Activated CD4-positive, alpha-beta T cell treated with anti-CD3 and anti-CD28 coated beads for 36 hours (primary cell): ENCODE measurements at regions of chr7 and their contacts with region 1.

Region 1: DNA sequence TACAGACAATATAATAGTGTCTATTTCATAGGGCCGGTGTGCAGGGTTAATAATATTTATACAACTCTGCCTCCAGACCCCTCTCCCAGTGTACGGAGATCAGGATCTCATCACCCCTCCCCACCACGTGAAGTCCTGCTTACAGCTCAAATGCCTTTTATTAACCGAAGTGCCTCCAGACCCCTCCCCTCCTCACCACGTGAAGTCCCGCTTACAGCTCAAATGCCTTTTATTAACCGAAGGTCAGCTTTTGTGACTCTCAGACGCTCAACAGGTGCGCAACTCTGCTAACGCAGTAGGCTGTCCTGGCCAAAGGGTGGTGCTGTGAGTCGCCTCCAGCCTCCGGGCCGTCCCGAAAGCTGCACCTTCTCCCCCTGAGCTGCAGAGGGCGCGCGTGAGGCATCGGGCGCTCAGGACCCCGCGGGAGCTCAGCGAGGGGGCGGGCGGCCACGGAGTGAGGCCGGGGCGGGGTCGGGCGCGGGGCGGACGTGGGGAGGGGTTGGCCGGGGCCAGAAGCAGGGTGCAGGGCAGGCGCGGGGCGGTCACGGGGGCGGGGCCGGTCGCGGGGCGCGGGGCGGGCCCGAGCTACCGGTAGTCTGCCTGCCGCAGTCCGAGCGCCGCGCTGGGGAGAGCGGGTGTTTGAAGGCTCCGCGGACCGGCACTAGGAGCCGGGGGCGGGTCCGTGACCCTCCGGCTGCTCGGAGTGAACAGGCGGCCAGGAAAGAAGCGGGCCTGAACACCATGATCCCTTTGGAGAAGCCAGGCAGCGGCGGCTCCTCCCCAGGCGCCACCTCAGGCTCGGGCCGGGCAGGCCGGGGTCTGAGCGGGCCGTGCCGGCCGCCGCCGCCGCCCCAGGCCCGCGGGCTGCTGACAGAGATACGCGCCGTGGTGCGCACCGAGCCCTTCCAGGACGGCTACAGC is at the start of gene STK17A:
- DNase-seq: peak; percentile 96
- ATAC-seq: peak; percentile 77
- H3K4me3 Mint-ChIP-seq: peak within 1 kb of the TSS; percentile 99
- H3K27ac Mint-ChIP-seq: peak within 1 kb of the TSS; percentile 97
- H3K4me1 Mint-ChIP-seq: peaks cover 29% of the 10 kb centered on the region
- H3K27me3 Mint-ChIP-seq: peaks cover 6% of the 10 kb centered on the region
- total RNA-seq, gene STK17A: 43.2 to 50.9 TPM

Region 2: DNA sequence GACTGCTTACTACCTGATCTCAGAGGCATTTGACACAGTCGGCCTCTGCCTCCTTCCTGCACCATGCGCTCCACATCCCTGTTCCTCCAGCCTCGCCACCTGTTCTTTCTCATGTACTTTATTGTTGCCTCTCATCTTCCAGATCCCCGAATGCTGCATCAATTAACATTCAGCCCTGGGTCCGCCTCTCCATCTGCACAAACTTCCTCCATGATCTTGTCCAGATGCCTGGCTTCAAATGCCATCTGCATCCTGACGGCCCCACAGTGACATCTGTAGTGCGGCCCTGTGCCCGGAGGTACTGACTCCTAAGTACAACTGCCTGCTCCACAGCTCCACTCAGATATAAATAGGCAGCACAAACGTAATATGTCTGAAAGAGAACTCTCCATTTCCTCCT is 51.1 kb before region 1 on chr7:
- CTCF ChIA-PET with region 1: no interaction called
- POLR2A ChIA-PET with region 1: no interaction called
- intact Hi-C with region 1: no loop called
- DNase-seq: no peak
- ATAC-seq: no peak
- H3K4me3 Mint-ChIP-seq: no peak overlapping the region
- H3K27ac Mint-ChIP-seq: no peak overlapping the region
- H3K4me1 Mint-ChIP-seq: no peaks in the 10 kb centered on the region
- H3K27me3 Mint-ChIP-seq: no peaks in the 10 kb centered on the region

Region 3: GRCh38 chr7:43625453-43625852 is 42.7 kb after region 1 on chr7:
- CTCF ChIA-PET with region 1: interaction called, 45 read pairs
- POLR2A ChIA-PET with region 1: interaction called, 8 read pairs
- intact Hi-C with region 1: loop called in 1 of 2 experiments (anchors 1 kb)
- DNase-seq: peak; percentile 60
- ATAC-seq: peak; percentile 62
- H3K4me3 Mint-ChIP-seq: peak overlapping the region; percentile 7
- H3K27ac Mint-ChIP-seq: peak overlapping the region; percentile 63
- H3K4me1 Mint-ChIP-seq: peaks cover 91% of the 10 kb centered on the region
- H3K27me3 Mint-ChIP-seq: no peaks in the 10 kb centered on the region

Region 4: GRCh38 chr7:43669286-43670081 is 86.7 kb after region 1 on chr7:
- CTCF ChIA-PET with region 1: interaction called, 20 read pairs
- POLR2A ChIA-PET with region 1: interaction called, 8 read pairs
- intact Hi-C with region 1: loop called in 1 of 2 experiments (anchors 1 kb)
- DNase-seq: peak; percentile 93
- ATAC-seq: peak; percentile 85
- H3K4me3 Mint-ChIP-seq: peak overlapping the region; percentile 68
- H3K27ac Mint-ChIP-seq: peak overlapping the region; percentile 94
- H3K4me1 Mint-ChIP-seq: peaks cover 84% of the 10 kb centered on the region
- H3K27me3 Mint-ChIP-seq: no peaks in the 10 kb centered on the region

Region 5: GRCh38 chr7:43721193-43721806 is 138.5 kb after region 1 on chr7:
- CTCF ChIA-PET with region 1: interaction called, 125 read pairs
- POLR2A ChIA-PET with region 1: interaction called, 3 read pairs
- intact Hi-C with region 1: loop called (anchors 1 kb)
- DNase-seq: no peak
- ATAC-seq: no peak
- H3K4me3 Mint-ChIP-seq: no peak overlapping the region
- H3K27ac Mint-ChIP-seq: peak overlapping the region; percentile 52
- H3K4me1 Mint-ChIP-seq: peaks cover 41% of the 10 kb centered on the region
- H3K27me3 Mint-ChIP-seq: no peaks in the 10 kb centered on the region

Region 6: GRCh38 chr7:43799589-43799988 is 216.8 kb after region 1 on chr7:
- CTCF ChIA-PET with region 1: interaction called, 16 read pairs
- POLR2A ChIA-PET with region 1: no interaction called
- intact Hi-C with region 1: loop called in 1 of 2 experiments (anchors 1 kb)
- DNase-seq: no peak
- ATAC-seq: peak; percentile 53
- H3K4me3 Mint-ChIP-seq: no peak overlapping the region
- H3K27ac Mint-ChIP-seq: no peak overlapping the region
- H3K4me1 Mint-ChIP-seq: no peaks in the 10 kb centered on the region
- H3K27me3 Mint-ChIP-seq: no peaks in the 10 kb centered on the region

Region 7: GRCh38 chr7:43925984-43926797 is 343.4 kb after region 1 on chr7 and contains the start of gene UBE2D4:
- CTCF ChIA-PET with region 1: no interaction called
- POLR2A ChIA-PET with region 1: no interaction called
- intact Hi-C with region 1: loop called in 1 of 2 experiments (anchors 5 kb)
- DNase-seq: peak; percentile 94
- ATAC-seq: peak; percentile 92
- H3K4me3 Mint-ChIP-seq: peak within 1 kb of the TSS; percentile 91
- H3K27ac Mint-ChIP-seq: peak within 1 kb of the TSS; percentile 98
- H3K4me1 Mint-ChIP-seq: peaks cover 29% of the 10 kb centered on the region
- H3K27me3 Mint-ChIP-seq: no peaks in the 10 kb centered on the region
- total RNA-seq, gene UBE2D4: 10.1 to 10.7 TPM